ENCODE measurements at regions of chr12 and their contacts with region 1.

Region 1: GRCh38 chr12:124493809-124494750 is 73.3 kb downstream of the NCOR2 start:
- DNase-seq: peak; percentile 86
- ATAC-seq: peak; percentile 96
- H3K4me3 ChIP-seq: peak overlapping the region; percentile 38; the same call in 1 of the 2 replicates
- H3K27ac ChIP-seq: peak overlapping the region; percentile 91
- H3K4me1 ChIP-seq: peaks cover 62% of the 10 kb centered on the region
- H3K27me3 ChIP-seq: no peaks in the 10 kb centered on the region
- CTCF ChIP-seq: no peak
- EP300 ChIP-seq: peak; percentile 63 to 84; a peak in 3 of 4 replicates
- POLR2A ChIP-seq: peak; percentile 91
- RAD21 ChIP-seq: 0 out of 2 replicates have a peak, but pooled peaks have one; percentile 5

Region 2: DNA sequence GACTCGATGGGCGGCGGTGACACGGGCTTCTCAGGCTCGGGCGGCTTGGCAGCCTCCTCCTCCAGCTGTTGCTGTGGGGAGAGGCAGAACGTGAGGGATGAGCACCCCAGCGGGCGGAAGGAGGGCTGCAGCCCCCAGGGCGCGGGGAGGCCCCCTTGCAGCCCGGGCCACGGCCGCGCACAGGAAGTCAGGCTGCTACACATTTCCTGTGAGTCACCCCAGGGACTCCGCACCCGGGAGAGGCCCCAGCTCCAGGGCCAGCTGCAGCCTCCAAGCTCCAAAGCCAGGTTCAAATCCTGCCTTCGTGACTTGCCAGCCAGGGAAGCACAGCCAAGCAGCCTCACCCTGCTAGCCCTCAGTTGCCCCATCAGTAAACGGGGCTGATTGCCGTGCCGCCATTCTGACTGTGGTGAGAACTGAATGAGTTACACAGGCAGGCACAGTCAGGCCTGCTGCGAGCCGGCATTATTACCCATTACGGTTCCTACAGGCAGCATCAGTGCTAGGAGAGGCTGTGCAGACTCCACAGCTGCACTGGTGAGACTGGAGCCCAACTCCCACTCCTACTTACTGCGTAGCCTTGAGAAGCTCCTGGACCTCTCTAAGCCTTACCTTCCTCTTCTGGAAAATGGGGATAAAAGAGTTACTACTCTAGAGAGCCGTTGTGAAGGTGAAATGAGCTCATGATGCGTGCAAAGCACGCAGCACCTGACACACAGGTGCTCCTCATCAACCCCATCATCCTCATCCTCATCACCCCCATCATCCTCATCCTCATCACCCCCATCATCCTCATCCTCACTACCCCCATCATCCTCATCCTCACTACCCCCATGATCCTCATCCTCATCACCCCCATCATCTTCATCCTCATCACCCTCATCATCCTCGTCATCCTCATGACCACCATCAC is 27.6 kb before region 1 on chr12:
- CTCF ChIA-PET with region 1: interaction called, 4 read pairs
- POLR2A ChIA-PET with region 1: interaction called, 4 read pairs
- RAD21 ChIA-PET with region 1: interaction called, 18 read pairs
- SMC1A ChIA-PET with region 1: interaction called, 11 read pairs
- in situ Hi-C with region 1: no loop called
- intact Hi-C with region 1: no loop called
- DNase-seq: no peak
- ATAC-seq: peak; percentile 99
- H3K4me3 ChIP-seq: no peak overlapping the region; the same call in 1 of the 2 replicates
- H3K27ac ChIP-seq: peak overlapping the region; percentile 82
- H3K4me1 ChIP-seq: peaks cover 17% of the 10 kb centered on the region
- H3K27me3 ChIP-seq: no peaks in the 10 kb centered on the region
- CTCF ChIP-seq: peak; percentile 39 to 48 (median 39); a peak in 5 of 6 replicates
- EP300 ChIP-seq: 0 out of 4 replicates have a peak, but pooled peaks of 1 of the 2 experiments have one; percentile 23
- POLR2A ChIP-seq: peak; percentile 71
- RAD21 ChIP-seq: peak; percentile 51

Region 3: DNA sequence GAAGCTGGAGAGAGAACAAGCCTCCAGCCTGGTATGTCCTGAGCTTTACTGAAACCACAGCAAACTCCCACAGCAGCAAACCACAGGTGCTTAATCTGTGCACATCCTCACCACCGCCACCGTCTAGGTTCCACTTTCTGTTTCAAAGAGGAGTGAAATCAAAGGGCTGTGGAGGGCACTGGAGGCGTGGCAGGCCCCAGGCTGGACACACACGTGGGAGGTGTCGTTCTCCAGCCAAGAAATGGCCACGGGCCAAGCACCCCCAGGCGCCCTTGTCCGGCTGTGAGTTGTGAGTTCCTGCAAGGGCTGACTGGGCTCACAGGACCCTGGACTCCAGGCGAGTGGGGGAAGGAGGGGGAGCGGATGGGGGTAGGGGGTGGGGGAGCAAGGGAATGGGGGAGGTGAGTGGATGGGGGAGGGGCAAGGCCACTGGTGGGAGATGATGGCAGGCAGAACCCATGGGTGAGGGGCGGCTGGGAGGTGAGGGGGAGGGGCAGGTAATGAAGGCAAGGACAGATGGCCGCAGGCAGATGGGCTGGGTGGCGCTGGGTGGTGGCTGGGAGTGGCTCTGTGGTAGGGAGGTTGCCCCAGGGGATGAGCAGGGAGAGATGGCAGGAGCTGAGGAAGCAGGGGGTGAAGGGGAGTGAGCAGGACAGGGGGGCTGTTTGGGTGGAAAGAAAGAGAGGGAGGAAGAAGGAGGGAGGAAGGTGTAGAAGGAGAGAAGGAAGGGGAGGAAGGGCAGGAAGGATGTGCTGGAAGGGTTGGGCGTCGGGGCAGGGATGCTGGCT is 13.4 kb before region 1 on chr12:
- CTCF ChIA-PET with region 1: interaction called, 4 read pairs
- POLR2A ChIA-PET with region 1: interaction called, 15 read pairs
- RAD21 ChIA-PET with region 1: interaction called, 7 read pairs
- SMC1A ChIA-PET with region 1: interaction called, 7 read pairs
- in situ Hi-C with region 1: no loop called
- intact Hi-C with region 1: loop called (anchors 2 kb)
- DNase-seq: peak; percentile 84
- ATAC-seq: peak; percentile 85
- H3K4me3 ChIP-seq: peak overlapping the region; percentile 51
- H3K27ac ChIP-seq: peak overlapping the region; percentile 86
- H3K4me1 ChIP-seq: peaks cover 66% of the 10 kb centered on the region
- H3K27me3 ChIP-seq: no peaks in the 10 kb centered on the region
- CTCF ChIP-seq: no peak
- EP300 ChIP-seq: peak in 1 of 2 experiments; percentile 50; a peak in 1 of 4 replicates
- POLR2A ChIP-seq: no peak; the same call in none of the 2 replicates
- RAD21 ChIP-seq: peak; percentile 16; the same call in 1 of the 2 replicates

Region 4: GRCh38 chr12:124545508-124546418 is 51.7 kb after region 1 on chr12:
- CTCF ChIA-PET with region 1: interaction called, 7 read pairs
- POLR2A ChIA-PET with region 1: interaction called, 3 read pairs
- RAD21 ChIA-PET with region 1: interaction called, 15 read pairs
- SMC1A ChIA-PET with region 1: interaction called, 9 read pairs
- in situ Hi-C with region 1: no loop called
- intact Hi-C with region 1: loop called (anchors 5 kb)
- DNase-seq: peak; percentile 76
- ATAC-seq: peak; percentile 95
- H3K4me3 ChIP-seq: peak overlapping the region; percentile 59
- H3K27ac ChIP-seq: peak overlapping the region; percentile 90
- H3K4me1 ChIP-seq: peaks cover 70% of the 10 kb centered on the region
- H3K27me3 ChIP-seq: no peaks in the 10 kb centered on the region
- CTCF ChIP-seq: no peak
- EP300 ChIP-seq: peak; percentile 61 to 72; a peak in 3 of 4 replicates
- POLR2A ChIP-seq: peak; percentile 37; the same call in 1 of the 2 replicates
- RAD21 ChIP-seq: no peak

Region 5: DNA sequence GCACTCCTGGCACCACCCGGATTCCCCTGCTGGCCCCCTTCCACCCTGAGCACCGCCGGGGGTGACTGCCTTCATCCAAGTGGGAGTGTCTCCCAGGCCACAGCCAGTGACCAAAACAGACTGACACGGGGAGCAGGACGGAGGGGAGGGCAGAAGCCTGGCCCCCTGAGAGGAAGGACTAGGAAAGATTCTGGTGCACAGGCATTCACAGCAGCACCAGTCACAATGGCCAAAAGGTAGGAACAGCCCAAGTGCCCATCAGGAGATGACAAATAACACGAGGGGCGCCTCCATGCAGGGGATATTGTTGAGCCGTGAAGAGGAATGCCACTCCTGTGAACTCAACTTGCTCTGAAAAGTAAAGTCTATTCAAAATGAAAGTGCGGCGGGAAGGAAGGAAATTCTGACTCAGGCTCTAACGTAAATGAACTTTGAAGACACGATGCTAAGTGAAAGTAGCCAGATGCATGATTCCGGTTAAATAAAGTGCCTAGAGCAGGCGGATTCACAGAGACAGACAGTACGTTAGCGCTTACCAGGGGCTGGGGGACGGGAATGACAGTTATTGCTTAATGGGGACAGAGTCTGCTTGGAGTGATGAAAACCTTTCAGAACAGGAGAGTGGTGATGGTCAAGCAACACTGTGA is 219.5 kb after region 1 on chr12:
- CTCF ChIA-PET with region 1: no interaction called
- POLR2A ChIA-PET with region 1: no interaction called
- RAD21 ChIA-PET with region 1: no interaction called
- SMC1A ChIA-PET with region 1: interaction called, 3 read pairs
- in situ Hi-C with region 1: no loop called
- intact Hi-C with region 1: loop called (anchors 1 kb)
- DNase-seq: peak; percentile 93
- ATAC-seq: peak; percentile 91
- H3K4me3 ChIP-seq: peak overlapping the region; percentile 32; the same call in 1 of the 2 replicates
- H3K27ac ChIP-seq: peak overlapping the region; percentile 79
- H3K4me1 ChIP-seq: peaks cover 17% of the 10 kb centered on the region
- H3K27me3 ChIP-seq: no peaks in the 10 kb centered on the region
- CTCF ChIP-seq: no peak
- EP300 ChIP-seq: peak; percentile 94 to 96
- POLR2A ChIP-seq: no peak
- RAD21 ChIP-seq: peak; percentile 29; the same call in 1 of the 2 replicates